HepG2 (cell line): ENCODE measurements at regions of chr19 and their contacts with region 1.

Region 1: DNA sequence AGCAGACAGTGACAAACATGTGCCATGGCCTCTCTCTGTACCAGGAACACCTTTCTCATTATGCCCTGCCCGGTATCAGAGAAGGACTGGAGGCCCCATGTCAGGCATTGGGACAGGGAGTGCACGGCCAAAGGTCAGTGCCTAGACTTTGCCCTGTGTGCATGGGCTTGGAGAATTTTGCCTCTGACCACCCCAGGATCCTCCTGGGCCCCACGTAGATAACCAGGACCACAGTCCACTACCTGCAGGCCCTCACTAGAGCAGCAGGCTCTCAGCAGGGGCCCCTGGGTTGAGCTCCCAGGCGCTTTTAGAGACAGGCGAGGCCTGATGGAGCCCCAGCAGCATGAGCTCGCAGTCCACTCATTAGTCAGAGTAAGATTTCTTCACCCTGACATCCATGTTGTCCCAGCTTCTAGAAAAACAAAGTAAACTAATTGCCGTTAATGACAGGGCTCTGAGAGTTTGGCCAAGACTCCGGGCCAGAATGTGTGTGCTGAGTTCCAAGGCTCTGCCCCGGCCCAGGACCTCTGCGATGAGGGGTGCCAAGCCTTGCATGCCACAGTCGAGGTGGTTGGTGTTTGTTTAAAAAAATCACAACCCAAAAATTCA is 42.7 kb downstream of the CAPN12 start:
- DNase-seq: peak; percentile 93
- ATAC-seq: peak; percentile 89
- H3K4me3 ChIP-seq: peak overlapping the region in 1 of 3 experiments; percentile 47; a peak in 2 of 6 replicates
- H3K27ac ChIP-seq: peak overlapping the region; percentile 99
- H3K4me1 ChIP-seq: peaks cover 95% of the 10 kb centered on the region
- H3K27me3 ChIP-seq: no peaks in the 10 kb centered on the region
- CTCF ChIP-seq: peak; percentile 21; the same call in 1 of the 2 replicates
- EP300 ChIP-seq: peak; percentile 83 to 92
- POLR2A ChIP-seq: peak; percentile 20 to 75; a peak in 2 of 4 replicates
- RAD21 ChIP-seq: peak; percentile 67

Region 2: GRCh38 chr19:38658462-38659306 is 42.9 kb before region 1 on chr19:
- CTCF ChIA-PET with region 1: no interaction called
- POLR2A ChIA-PET with region 1: interaction called, 28 read pairs
- in situ Hi-C with region 1: loop called (anchors 5 kb)
- intact Hi-C with region 1: loop called (anchors 5 kb)
- DNase-seq: peak; percentile 95
- ATAC-seq: peak; percentile 80
- H3K4me3 ChIP-seq: no peak overlapping the region; a peak in 1 of 6 replicates
- H3K27ac ChIP-seq: peak overlapping the region; percentile 69
- H3K4me1 ChIP-seq: peaks cover 98% of the 10 kb centered on the region
- H3K27me3 ChIP-seq: no peaks in the 10 kb centered on the region
- CTCF ChIP-seq: no peak
- EP300 ChIP-seq: peak; percentile 36 to 62; a peak in 1 of 4 replicates
- POLR2A ChIP-seq: peak in 1 of 2 experiments; percentile 51; a peak in 2 of 4 replicates
- RAD21 ChIP-seq: no peak

Region 3: DNA sequence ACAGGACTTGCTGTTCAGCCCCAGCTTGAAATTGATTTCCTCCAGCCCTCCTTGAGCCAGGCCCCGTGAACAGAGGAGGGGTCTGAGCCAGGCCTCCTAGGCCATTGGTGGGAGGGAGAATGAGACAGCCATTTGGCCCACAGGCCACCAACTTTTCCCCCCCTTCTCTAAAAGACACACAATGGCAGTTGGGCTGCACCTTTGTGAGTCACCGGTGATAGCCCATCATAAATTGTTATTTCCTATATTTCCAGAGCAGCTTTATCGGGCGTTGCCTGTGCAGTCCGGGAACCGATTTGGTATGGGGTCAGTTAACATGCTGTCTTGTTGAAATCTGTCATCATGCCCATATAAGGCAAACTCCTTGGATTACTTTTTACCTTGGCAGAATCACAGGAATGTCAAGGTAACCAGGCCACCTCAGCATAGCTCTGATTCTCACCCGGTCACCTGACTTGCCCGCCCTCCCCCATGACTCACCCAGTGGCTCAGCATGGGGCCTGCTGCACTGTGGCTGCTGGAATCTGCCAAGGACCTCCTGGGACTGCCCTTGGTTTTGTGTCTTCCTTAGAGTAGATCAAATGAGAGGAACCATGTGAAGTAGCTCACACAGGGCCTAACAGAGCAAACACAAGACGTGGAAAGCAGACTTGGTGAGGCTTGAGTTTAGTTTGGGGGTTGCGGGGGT is 18.0 kb before region 1 on chr19:
- CTCF ChIA-PET with region 1: no interaction called
- POLR2A ChIA-PET with region 1: interaction called, 51 read pairs
- in situ Hi-C with region 1: no loop called
- intact Hi-C with region 1: no loop called
- DNase-seq: peak; percentile 96
- ATAC-seq: peak; percentile 85
- H3K4me3 ChIP-seq: peak overlapping the region in 1 of 3 experiments; percentile 27; a peak in 2 of 6 replicates
- H3K27ac ChIP-seq: peak overlapping the region; percentile 85
- H3K4me1 ChIP-seq: peaks cover 99% of the 10 kb centered on the region
- H3K27me3 ChIP-seq: no peaks in the 10 kb centered on the region
- CTCF ChIP-seq: no peak
- EP300 ChIP-seq: peak in 1 of 2 experiments; percentile 50; a peak in 2 of 4 replicates
- POLR2A ChIP-seq: peak in 1 of 2 experiments; percentile 35; a peak in 1 of 4 replicates
- RAD21 ChIP-seq: no peak

Region 4: GRCh38 chr19:38711726-38712153 is 10.2 kb after region 1 on chr19:
- CTCF ChIA-PET with region 1: no interaction called
- POLR2A ChIA-PET with region 1: interaction called, 15 read pairs
- in situ Hi-C with region 1: no loop called
- intact Hi-C with region 1: no loop called
- DNase-seq: no peak
- ATAC-seq: peak; percentile 4; the same call in 1 of the 3 replicates
- H3K4me3 ChIP-seq: no peak overlapping the region
- H3K27ac ChIP-seq: no peak overlapping the region
- H3K4me1 ChIP-seq: peaks cover 14% of the 10 kb centered on the region
- H3K27me3 ChIP-seq: no peaks in the 10 kb centered on the region
- CTCF ChIP-seq: no peak
- EP300 ChIP-seq: no peak
- POLR2A ChIP-seq: 0 out of 4 replicates have a peak, but pooled peaks of 1 of the 2 experiments have one; percentile 10
- RAD21 ChIP-seq: no peak

Region 5: GRCh38 chr19:38718747-38719543 is 17.4 kb after region 1 on chr19:
- CTCF ChIA-PET with region 1: no interaction called
- POLR2A ChIA-PET with region 1: interaction called, 26 read pairs
- in situ Hi-C with region 1: no loop called
- intact Hi-C with region 1: loop called (anchors 2 kb)
- DNase-seq: no peak
- ATAC-seq: peak; percentile 9; the same call in 2 of the 3 replicates
- H3K4me3 ChIP-seq: no peak overlapping the region
- H3K27ac ChIP-seq: no peak overlapping the region
- H3K4me1 ChIP-seq: peaks cover 50% of the 10 kb centered on the region
- H3K27me3 ChIP-seq: no peaks in the 10 kb centered on the region
- CTCF ChIP-seq: peak; percentile 58
- EP300 ChIP-seq: no peak
- POLR2A ChIP-seq: no peak
- RAD21 ChIP-seq: peak; percentile 46; the same call in 1 of the 2 replicates